ENCODE measurements at regions of chr1 and their contacts with region 1.

Region 1: DNA sequence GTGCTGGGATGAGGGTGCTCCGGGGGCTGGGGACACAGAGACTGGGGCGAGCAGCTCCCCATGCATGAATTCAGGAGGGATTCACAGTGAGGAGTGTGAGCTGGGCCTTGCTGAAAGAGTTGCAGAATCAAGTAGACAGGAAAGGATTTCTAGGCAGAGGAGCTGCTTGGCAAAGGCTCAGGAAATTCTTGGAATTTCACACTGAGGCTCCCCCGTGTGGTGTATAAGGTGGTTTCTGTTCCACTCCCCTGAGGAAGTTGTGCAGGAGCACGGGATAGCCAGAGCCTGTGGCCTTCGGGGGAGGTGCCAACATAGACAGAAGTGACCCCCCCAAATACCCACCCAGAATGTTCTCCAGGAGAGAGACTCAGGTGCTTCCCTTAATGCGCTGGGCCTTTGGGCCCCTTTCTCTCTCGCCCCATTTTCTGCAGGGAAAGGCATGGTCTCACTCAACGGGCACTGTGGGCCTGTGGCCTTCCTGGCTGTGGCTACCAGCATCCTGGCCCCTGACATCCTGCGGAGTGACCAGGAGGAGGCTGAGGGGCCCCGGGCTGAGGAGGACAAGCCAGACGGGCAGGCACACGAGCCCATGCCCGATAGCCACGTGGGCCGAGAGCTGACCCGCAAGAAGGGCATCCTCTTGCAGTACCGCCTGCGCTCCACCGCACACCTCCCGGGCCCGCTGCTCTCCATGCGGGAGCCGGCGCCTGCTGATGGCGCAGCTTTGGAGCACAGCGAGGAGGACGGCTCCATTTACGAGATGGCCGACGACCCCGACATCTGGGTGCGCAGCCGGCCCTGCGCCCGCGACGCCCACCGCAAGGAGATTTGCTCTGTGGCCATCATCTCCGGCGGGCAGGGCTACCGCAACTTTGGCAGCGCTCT is 58.5 kb upstream of the ACTL8 start:
- DNase-seq: peak; percentile 52
- H3K27ac ChIP-seq: no peak overlapping the region
- CTCF ChIP-seq: peak; percentile 32; the same call in 1 of the 2 replicates

Region 2: GRCh38 chr1:17661546-17662157 is 35.0 kb before region 1 on chr1:
- CTCF ChIA-PET with region 1: interaction called, 10 read pairs
- POLR2A ChIA-PET with region 1: no interaction called
- DNase-seq: peak; percentile 66
- H3K27ac ChIP-seq: no peak overlapping the region
- CTCF ChIP-seq: peak; percentile 81

Measured in RWPE1 (cell line).